Left colon (tissue), 2 donors: ENCODE measurements at regions of chr11 and their contacts with region 1.

Region 1: DNA sequence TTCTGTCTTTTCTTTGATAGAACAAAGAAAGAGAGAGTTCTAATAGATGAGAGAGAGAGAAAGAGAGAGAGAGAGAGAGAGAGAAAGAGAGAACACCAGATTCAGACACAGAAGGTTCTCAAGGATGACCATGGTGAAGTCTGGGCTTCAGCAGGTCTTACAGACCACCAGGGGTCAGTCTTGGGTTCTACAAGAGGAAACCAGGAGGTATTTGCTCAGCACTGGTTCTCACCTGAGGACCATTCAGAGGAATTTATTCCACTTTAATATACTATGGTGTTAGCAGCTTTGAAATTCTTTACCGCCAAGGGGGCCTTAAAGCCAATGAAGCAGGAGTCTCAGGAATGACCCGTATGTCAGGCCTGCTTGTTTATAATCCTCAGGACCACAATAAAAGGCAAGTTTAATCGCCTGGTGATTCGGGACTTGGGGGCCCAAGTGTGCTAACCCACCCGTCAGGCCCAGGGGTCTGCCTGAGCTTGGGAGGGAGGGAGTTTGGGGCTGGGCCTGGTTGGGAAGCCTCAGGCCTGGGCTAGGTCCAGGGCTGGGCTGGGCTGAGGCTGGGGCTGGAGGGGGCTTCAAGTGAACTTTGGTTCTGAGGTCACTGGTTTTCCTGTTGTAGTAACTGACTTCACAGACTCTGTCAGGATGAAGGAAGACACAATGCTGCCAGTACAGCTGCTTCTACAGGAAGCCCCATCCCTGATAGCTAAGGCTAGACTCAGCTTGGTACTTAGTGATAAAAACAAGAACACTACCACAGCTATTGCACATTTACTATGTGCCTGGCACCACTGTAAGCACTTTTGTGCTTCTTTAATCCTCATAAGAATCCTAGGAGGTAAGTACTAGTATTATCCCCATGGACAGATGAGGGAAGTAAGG is 179.2 kb upstream of the ZBED5 start:
- DNase-seq: peak in 1 of 2 donors; percentile 29
- ATAC-seq: peak; percentile 77

Region 2: DNA sequence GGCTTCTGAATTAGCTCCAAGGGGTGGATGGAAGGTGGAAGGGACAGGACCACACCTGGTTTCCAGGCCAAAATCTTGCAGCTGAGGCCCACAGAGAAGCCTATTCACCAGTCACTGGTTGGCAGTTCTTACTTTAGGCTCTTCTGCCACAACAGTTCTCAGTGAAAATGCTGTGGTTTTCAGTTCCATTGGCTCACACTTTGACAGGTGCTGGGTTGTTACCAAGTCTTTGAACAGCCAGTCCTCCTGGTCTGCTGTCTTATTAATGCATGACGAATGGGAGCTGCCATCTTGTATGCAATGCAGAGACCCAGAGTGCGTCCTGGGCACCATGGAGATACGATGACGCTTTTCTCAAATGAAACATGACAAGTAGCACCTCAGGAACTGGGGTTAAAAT is 52.7 kb after region 1 on chr11:
- intact Hi-C with region 1: no loop called
- DNase-seq: no peak
- ATAC-seq: no peak

Region 3: GRCh38 chr11:11163236-11163635 is 126.1 kb after region 1 on chr11:
- intact Hi-C with region 1: loop called in 1 of 2 experiments (anchors 10 kb)
- DNase-seq: no peak
- ATAC-seq: peak; percentile 61

Region 4: DNA sequence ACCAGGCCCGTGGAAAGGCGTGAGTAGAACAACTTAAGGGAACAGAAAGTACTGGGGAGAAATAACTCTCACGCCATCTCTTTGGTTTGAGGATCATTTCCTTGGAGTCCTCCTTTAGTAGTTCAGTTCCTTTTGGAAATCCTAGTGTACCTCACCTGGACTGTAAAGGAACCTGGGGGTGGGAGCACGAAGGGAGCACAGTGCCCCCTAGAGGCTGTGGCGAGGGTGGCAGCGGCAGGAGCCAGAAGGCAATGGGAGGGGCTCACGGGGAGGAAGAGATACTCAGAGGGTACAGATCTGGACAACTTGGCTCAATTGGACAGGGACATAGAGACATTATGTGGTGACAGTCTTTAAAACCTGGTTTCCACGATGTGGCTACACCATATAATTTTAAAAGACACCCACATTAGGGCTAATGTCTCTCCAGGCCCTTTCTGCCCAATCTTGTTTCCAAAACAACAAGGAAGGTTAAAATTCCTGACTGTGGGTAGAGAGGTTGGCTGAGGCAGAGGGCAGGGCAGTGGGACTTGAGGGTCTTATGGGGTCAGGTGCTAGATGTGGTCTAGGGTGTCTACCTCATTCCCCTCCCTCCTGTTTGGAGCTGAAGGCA is 229.0 kb after region 1 on chr11:
- intact Hi-C with region 1: loop called in 1 of 2 experiments (anchors 10 kb)
- DNase-seq: peak in 1 of 2 donors; percentile 68
- ATAC-seq: peak; percentile 80

Region 5: DNA sequence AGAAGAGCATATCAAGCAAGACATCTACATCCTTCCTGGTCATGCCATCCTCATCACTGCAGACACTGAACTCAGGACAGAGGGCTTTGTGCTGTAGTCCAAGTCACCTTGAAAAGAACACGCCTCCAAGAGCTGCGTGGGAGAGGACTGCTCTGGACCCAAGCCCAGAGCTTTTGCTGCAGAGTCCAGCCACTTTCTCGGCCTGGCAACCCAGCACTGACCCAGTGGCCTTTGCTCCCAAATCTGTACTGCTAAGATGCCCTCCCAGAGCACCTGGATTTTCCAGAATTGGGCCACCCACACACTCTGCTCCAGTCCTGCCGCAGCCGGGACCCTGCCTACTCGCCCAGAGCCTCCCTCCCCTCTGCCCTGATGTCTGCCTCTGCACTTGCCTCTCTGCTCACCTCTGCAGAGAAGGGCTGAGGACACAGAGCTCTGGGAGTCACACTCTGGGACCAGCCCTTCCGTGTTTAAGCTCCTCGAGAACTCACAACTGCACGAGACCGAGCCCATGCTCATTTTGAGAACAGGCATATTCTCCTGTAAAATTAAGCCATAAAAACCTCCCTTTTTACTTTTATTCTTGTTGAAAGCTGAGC is 399.7 kb after region 1 on chr11:
- intact Hi-C with region 1: no loop called
- DNase-seq: no peak
- ATAC-seq: no peak

Region 6: GRCh38 chr11:11787305-11788062 is 750.4 kb after region 1 on chr11:
- intact Hi-C with region 1: loop called in 1 of 2 experiments (anchors 10 kb)
- DNase-seq: peak; percentile 55 to 79
- ATAC-seq: peak; percentile 94